Endothelial cell of umbilical vein (primary cell): ENCODE measurements at regions of chrX and their contacts with region 1.

Region 1: GRCh38 chrX:133792198-133792953 is 193.0 kb downstream of the GPC3 start:
- DNase-seq: peak; percentile 68
- H3K4me3 ChIP-seq: no peak overlapping the region
- H3K27ac ChIP-seq: no peak overlapping the region
- H3K4me1 ChIP-seq: no peaks in the 10 kb centered on the region
- H3K27me3 ChIP-seq: no peaks in the 10 kb centered on the region
- CTCF ChIP-seq: peak; percentile 91 to 92
- POLR2A ChIP-seq: no peak

Region 2: DNA sequence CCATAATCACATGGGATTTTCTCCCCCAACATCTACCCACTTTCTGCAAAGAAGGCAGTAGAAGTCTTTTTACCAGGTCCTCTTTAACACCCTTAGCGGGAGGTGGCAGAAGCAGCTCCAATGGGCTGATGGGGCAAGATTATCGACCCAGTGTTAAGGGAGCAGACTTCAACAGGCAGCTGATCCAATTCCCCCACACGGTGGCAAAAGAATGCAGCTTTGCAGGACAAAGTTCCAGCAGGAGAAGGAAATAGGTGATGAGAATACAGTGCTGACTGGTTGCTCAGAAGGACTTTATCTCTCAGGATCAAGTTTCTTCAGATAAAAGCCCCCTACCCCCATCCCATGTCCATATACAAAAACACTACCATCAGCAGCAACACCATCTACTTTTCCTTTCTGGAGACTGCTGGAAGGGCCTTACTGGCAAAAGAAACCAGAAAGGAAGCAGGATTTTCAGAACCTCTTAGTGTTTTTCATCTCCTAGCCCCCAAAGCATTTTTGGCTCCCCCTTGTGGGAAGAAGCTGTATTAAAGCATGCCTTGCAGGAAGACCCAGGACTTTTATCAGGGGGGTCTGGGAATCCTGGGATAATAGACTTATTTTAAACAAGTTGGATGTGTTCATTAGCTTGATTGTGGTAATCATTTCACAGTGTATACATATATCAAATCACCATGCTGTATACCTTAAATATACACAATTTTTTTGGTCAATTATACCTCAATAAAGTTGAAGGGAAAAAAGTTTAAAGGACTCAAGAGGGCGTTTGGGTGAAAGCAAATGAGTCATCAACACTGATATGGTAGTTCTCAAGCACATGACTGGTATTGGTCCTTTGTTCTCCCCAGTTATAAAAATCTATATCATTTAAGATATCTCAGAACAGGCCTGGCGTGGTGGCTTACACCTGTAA is 46.6 kb after region 1 on chrX:
- CTCF ChIA-PET with region 1: interaction called, 12 read pairs
- POLR2A ChIA-PET with region 1: no interaction called
- dilution Hi-C with region 1: no loop called
- intact Hi-C with region 1: loop called (anchors 2 kb)
- DNase-seq: peak; percentile 30
- H3K4me3 ChIP-seq: no peak overlapping the region
- H3K27ac ChIP-seq: no peak overlapping the region
- H3K4me1 ChIP-seq: no peaks in the 10 kb centered on the region
- H3K27me3 ChIP-seq: no peaks in the 10 kb centered on the region
- CTCF ChIP-seq: peak; percentile 36 to 47
- POLR2A ChIP-seq: no peak

Region 3: DNA sequence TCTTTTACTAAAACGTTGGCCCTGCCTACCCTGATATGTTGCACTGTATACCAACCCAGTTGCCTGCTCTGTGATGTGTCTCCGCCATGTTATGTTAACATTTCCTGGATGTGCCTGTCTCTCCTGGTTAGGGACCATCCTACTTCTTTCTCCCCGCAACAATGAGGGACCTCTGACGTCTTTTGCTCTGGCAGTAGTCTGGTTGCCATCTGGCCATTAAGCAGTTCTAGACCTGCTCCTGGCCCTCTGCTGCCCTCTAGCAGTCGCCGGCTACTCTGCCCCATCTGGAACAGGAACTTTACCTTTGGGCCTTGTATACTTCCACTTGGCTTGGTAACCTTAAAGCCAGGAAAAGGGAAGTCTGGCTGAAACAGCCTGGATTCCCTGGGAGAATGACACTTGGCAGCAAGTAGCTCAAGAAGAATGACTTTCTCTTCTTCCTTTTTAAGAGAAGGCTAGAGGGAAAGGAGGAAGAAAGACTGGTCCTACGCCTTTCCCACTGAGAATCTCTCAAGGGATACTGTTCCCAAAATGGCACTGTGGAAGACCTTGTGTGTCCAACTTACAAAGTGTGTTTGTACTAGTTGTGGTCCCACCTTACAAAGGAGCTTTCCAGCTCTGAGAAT is 129.5 kb after region 1 on chrX:
- CTCF ChIA-PET with region 1: interaction called, 4 read pairs
- POLR2A ChIA-PET with region 1: no interaction called
- dilution Hi-C with region 1: no loop called
- intact Hi-C with region 1: loop called (anchors 5 kb)
- DNase-seq: peak; percentile 1
- H3K4me3 ChIP-seq: no peak overlapping the region
- H3K27ac ChIP-seq: no peak overlapping the region
- H3K4me1 ChIP-seq: no peaks in the 10 kb centered on the region
- H3K27me3 ChIP-seq: no peaks in the 10 kb centered on the region
- CTCF ChIP-seq: peak; percentile 14 to 30
- POLR2A ChIP-seq: no peak

Region 4: GRCh38 chrX:134026565-134027311 is 234.4 kb after region 1 on chrX:
- CTCF ChIA-PET with region 1: interaction called, 13 read pairs
- POLR2A ChIA-PET with region 1: no interaction called
- dilution Hi-C with region 1: no loop called
- intact Hi-C with region 1: no loop called
- DNase-seq: peak; percentile 11
- H3K4me3 ChIP-seq: no peak overlapping the region
- H3K27ac ChIP-seq: no peak overlapping the region
- H3K4me1 ChIP-seq: no peaks in the 10 kb centered on the region
- H3K27me3 ChIP-seq: no peaks in the 10 kb centered on the region
- CTCF ChIP-seq: peak in 1 of 2 donors; percentile 9
- POLR2A ChIP-seq: no peak

Region 5: DNA sequence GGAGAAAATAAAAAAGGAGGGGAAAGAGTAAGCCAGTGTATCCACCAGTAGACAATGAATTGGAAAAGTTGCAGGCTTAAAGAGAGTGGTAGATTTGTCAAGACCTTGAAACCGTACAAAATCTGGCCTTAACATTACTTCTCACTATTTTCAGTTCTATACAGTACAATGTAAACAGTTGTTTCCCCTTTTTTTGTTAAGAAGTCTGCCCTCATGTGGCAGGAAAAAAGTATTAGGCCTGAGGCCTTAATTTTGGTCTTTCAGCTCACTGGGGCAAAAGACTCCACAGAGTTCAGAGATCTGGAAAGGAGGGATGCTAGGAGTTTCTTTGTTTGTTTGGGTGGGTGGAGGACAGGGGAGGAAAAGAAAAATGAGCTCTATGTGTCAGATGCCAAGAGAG is 351.9 kb after region 1 on chrX:
- CTCF ChIA-PET with region 1: interaction called, 37 read pairs
- POLR2A ChIA-PET with region 1: no interaction called
- dilution Hi-C with region 1: no loop called
- intact Hi-C with region 1: loop called (anchors 1 kb)
- DNase-seq: peak; percentile 4
- H3K4me3 ChIP-seq: no peak overlapping the region
- H3K27ac ChIP-seq: no peak overlapping the region
- H3K4me1 ChIP-seq: peaks cover under 1% of the 10 kb centered on the region
- H3K27me3 ChIP-seq: no peaks in the 10 kb centered on the region
- CTCF ChIP-seq: peak; percentile 7 to 25
- POLR2A ChIP-seq: no peak

Region 6: GRCh38 chrX:134254511-134254910 is 462.1 kb after region 1 on chrX:
- CTCF ChIA-PET with region 1: interaction called, 5 read pairs
- POLR2A ChIA-PET with region 1: no interaction called
- dilution Hi-C with region 1: no loop called
- intact Hi-C with region 1: loop called (anchors 1 kb)
- DNase-seq: no peak
- H3K4me3 ChIP-seq: no peak overlapping the region
- H3K27ac ChIP-seq: no peak overlapping the region
- H3K4me1 ChIP-seq: no peaks in the 10 kb centered on the region
- H3K27me3 ChIP-seq: no peaks in the 10 kb centered on the region
- CTCF ChIP-seq: no peak
- POLR2A ChIP-seq: no peak

Region 7: DNA sequence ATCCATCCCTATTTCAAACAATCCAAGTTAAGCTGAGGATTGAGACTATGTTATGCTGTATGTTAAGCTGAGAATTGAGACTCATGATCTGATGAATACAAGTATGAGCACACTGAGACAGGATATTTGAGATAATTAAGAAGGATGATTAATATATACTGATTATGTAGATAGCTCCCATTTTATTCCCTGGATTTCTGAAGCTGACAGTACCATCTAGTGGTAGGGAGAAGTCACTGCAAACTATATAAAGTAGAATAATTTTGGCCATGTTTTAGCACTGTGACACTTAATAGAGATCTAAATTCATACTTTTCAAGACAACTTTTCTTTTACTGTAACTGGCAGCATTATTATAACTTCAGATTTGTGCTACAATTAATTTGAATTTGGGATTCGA is 603.8 kb after region 1 on chrX:
- CTCF ChIA-PET with region 1: interaction called, 14 read pairs
- POLR2A ChIA-PET with region 1: no interaction called
- dilution Hi-C with region 1: no loop called
- intact Hi-C with region 1: no loop called
- DNase-seq: peak; percentile 16
- H3K4me3 ChIP-seq: no peak overlapping the region
- H3K27ac ChIP-seq: no peak overlapping the region
- H3K4me1 ChIP-seq: no peaks in the 10 kb centered on the region
- H3K27me3 ChIP-seq: no peaks in the 10 kb centered on the region
- CTCF ChIP-seq: peak; percentile 14 to 36
- POLR2A ChIP-seq: no peak